ENCODE measurements at regions of chr11 and their contacts with region 1.

Region 1: DNA sequence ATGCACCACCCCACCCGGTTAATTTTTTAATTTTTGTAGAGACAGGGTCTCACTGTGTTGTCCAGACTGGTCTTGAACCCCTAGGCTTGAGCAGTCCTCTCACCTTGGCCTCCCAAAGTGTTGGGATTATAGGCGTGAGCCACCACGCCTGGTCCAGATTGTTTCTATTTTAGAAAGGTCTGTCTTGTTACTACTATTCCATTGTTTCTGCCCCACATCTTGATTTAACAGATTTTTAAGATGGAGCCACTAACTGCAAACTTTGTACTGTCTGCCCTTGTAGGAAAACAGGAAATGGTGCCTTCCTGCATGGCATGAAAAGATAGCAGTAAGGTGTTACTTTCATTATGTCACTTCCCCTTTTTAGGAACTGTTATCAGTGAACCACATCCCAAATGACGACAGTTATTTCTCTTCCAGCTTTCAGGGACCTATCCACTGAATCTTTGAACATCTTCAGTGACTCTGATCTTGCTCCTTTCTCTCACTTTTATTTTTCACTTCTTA is 23.2 kb downstream of the TAF1D start:
- DNase-seq: no peak
- H3K4me3 Mint-ChIP-seq: no peak overlapping the region
- H3K27ac Mint-ChIP-seq: no peak overlapping the region
- H3K4me1 Mint-ChIP-seq: no peaks in the 10 kb centered on the region
- H3K27me3 Mint-ChIP-seq: no peaks in the 10 kb centered on the region
- CTCF ChIP-seq: no peak

Region 2: DNA sequence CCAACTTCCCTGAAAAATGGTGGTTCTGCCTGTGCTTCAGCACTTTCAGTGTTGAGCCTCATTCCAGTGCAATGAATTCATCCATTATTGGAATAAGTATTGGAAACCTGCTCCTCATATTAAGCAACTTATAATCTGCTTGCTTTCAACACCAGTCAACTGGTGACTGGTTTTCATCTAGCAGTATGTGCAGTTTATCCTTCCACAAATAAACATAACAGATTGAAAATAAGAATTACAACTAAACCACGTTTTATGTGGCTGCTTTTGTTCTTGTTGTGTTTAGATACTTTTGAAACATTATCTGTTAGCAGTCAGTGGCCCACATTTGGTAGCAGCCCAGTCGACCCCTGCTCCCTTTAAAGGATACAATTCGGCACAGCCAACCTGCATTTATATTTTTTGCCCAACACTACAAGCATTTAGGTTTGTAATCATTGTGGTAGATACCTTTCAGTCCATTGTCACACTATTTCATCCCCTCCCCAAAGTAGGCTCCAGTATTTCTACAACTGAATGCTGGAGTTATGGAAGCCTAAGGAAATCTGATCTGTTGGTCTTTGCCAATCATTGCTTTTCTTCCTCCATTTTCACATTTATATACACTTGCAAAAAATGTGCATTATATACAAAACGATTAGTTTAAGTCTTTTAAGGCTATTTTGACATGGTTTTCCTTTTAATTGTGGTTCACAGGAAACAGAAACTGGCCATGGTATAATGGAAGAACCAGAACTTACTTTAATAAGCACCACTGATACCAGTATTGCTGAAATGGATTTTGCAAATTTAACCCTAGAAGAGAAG is 10.1 kb after region 1 on chr11:
- CTCF ChIA-PET with region 1: no interaction called
- POLR2A ChIA-PET with region 1: interaction called, 16 read pairs
- intact Hi-C with region 1: no loop called
- DNase-seq: peak; percentile 27
- H3K4me3 Mint-ChIP-seq: no peak overlapping the region
- H3K27ac Mint-ChIP-seq: no peak overlapping the region
- H3K4me1 Mint-ChIP-seq: no peaks in the 10 kb centered on the region
- H3K27me3 Mint-ChIP-seq: no peaks in the 10 kb centered on the region
- CTCF ChIP-seq: no peak

Region 3: DNA sequence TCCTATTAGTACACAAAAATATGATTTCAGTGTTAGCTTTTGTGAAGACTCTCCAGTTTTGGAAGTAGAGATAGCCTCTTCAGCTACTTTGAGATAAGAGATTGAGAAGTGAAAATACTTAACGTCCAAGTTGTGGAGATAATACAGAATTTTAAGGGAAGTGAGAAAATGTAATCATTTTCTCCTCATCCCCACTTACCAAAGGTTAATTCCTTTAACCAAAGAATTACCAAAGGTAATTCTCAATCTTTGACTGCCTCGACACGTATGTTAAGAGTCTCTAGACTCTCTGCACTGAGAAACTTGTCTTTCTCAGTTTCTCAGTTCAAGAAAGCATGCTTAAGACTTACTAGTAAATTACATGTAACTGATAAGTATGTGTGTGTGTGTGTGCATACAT is 38.6 kb after region 1 on chr11:
- CTCF ChIA-PET with region 1: no interaction called
- POLR2A ChIA-PET with region 1: no interaction called
- intact Hi-C with region 1: no loop called
- DNase-seq: no peak
- H3K4me3 Mint-ChIP-seq: no peak overlapping the region
- H3K27ac Mint-ChIP-seq: no peak overlapping the region
- H3K4me1 Mint-ChIP-seq: no peaks in the 10 kb centered on the region
- H3K27me3 Mint-ChIP-seq: no peaks in the 10 kb centered on the region
- CTCF ChIP-seq: no peak

Region 4: GRCh38 chr11:95035316-95035715 is 1317.2 kb after region 1 on chr11:
- CTCF ChIA-PET with region 1: no interaction called
- POLR2A ChIA-PET with region 1: no interaction called
- intact Hi-C with region 1: no loop called
- DNase-seq: peak; percentile 36
- H3K4me3 Mint-ChIP-seq: no peak overlapping the region
- H3K27ac Mint-ChIP-seq: no peak overlapping the region
- H3K4me1 Mint-ChIP-seq: peaks cover 9% of the 10 kb centered on the region
- H3K27me3 Mint-ChIP-seq: no peaks in the 10 kb centered on the region
- CTCF ChIP-seq: no peak